Activated T-helper 2 cell treated with anti-CD3 and anti-CD28 coated beads, Interferon-gamma antibody, Interleukin-2, Interleukin-4, amounts not matched to agents 10 μg/mL and 5 μg/mL and 100 μg/mL, durations not matched to agents 14 hours and 24 hours and 36 hours (primary cell): ENCODE measurements at regions of chr2 and their contacts with region 1.

Region 1: GRCh38 chr2:75710577-75711253 is at the start of gene GCFC2:
- DNase-seq: peak; percentile 84
- H3K4me3 Mint-ChIP-seq: peak within 1 kb of the TSS; percentile 88
- H3K27ac Mint-ChIP-seq: peak within 1 kb of the TSS; percentile 94
- H3K4me1 Mint-ChIP-seq: peaks cover 18% of the 10 kb centered on the region
- H3K27me3 Mint-ChIP-seq: peaks cover 5% of the 10 kb centered on the region
- total RNA-seq, gene GCFC2: 32.0 and 32.1 TPM in 2 replicates

Region 2: DNA sequence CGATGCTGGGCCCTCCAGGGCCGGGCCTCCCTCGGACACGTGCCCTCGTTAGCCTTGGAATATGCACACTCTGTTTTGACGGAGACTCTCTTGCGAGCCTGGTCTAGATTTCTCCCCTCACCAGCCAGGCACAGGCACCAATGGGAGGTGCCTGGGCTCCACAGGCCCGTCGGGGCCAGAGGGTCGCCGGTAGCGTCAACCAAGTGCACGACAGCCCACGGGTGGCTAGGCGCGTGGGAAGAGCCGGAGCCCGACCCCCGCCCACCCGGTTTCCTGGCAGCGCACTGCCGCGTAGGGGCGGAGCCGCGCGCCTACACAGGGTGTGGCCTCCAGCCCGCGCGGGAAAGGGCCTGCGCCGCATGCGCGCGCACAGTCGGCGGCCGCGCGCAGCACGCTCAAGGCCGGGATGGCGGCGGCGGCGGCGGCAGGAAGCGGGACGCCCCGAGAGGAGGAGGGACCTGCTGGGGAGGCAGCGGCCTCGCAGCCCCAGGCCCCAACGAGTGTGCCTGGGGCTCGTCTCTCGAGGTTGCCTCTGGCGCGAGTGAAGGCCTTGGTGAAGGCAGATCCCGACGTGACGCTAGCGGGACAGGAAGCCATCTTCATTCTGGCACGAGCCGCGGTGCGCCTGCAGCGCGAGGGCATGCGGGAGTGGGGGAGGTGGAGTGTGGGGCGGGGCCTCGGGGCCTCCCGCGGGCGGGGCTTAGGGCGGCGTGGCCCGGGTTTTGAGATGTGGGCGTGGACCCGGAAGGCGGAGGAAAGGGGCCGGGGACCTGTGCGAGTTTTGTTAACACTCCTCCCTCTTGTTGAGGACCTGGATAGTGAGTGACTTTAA is 752.2 kb before region 1 on chr2 and contains the start of gene POLE4:
- intact Hi-C with region 1: loop called (anchors 2 kb)
- DNase-seq: peak; percentile 90
- H3K4me3 Mint-ChIP-seq: peak within 1 kb of the TSS; percentile 79
- H3K27ac Mint-ChIP-seq: peak within 1 kb of the TSS; percentile 86
- H3K4me1 Mint-ChIP-seq: peaks cover 51% of the 10 kb centered on the region
- H3K27me3 Mint-ChIP-seq: no peaks in the 10 kb centered on the region
- total RNA-seq, gene POLE4: 46.1 and 55.3 TPM in 2 replicates

Region 3: DNA sequence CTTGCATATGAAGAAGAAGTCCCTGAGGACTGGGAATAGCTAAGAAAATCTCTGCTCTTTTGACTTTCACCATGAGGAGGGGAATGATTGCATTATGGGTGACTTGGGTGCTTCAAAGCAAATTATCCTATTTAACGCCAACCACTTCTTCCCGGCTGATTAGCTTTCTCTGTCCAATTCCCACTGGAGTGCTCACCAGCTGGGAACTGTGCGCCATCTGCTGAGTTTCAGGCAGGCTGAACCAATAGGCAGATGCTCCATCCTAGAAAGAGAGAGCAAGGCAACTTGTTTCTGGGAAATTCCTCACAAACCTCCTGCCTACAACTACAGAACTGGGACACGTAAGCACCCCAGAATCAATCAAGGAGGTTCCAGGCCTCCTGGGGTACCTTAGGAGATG is 702.9 kb before region 1 on chr2:
- intact Hi-C with region 1: no loop called
- DNase-seq: no peak
- H3K4me3 Mint-ChIP-seq: no peak overlapping the region
- H3K27ac Mint-ChIP-seq: no peak overlapping the region
- H3K4me1 Mint-ChIP-seq: no peaks in the 10 kb centered on the region
- H3K27me3 Mint-ChIP-seq: no peaks in the 10 kb centered on the region

Region 4: DNA sequence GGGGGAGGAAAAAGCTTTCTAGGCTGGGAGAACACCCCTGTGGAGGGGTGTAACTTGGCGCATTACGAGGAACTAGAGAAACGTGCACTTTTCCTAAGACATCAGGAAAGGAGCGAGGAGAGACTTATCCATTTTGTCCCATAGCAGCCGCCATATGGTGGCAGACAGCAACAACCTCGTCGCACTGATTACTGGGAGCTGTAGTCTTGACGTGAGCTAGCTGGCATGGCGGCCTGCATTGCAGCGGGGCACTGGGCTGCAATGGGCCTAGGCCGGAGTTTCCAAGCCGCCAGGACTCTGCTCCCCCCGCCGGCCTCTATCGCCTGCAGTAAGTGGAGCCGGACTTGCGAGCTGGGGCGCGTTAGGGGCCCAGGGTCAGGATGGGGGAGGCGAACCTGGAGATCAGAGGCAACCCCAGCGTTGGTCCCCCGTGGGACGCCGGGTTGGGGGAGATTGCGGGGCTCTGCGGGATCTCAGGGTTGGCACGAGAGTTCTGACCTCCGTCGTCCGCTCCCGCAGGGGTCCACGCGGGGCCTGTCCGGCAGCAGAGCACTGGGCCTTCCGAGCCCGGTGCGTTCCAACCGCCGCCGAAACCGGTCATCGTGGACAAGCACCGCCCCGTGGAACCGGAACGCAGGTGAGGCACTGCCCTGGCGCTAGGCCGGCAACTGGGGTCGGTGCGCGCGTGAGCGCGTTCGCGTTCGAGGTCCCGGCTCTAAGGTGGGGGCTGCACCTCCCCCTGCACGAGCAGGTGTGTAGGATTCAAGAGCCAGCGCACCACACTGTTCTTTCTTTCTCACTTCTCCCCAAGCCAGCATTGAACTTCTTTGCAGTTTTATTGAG is 63.9 kb before region 1 on chr2 and contains the start of gene MRPL19:
- intact Hi-C with region 1: loop called (anchors 1 kb)
- DNase-seq: peak; percentile 71
- H3K4me3 Mint-ChIP-seq: peak within 1 kb of the TSS; percentile 91
- H3K27ac Mint-ChIP-seq: peak within 1 kb of the TSS; percentile 94
- H3K4me1 Mint-ChIP-seq: peaks cover 14% of the 10 kb centered on the region
- H3K27me3 Mint-ChIP-seq: no peaks in the 10 kb centered on the region
- total RNA-seq, gene MRPL19: 67.7 and 73.5 TPM in 2 replicates

Region 5: DNA sequence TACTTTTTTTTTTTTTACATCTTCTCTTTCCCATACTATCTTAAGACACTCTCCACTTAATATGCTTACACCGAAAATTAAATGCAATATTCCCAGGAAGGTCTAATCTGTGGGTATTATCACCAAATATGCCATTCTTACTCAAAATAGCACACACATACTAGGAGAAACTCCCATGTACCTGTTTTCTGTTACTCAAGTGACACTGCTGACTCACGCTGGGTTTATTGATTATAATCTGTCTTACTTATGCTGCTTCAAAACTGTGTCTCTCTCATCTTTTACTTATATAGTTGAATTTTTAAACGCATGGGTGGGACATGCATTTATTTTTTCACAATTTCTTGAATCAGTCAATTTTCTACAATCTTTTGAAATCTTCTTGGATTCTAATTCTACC is 34.3 kb before region 1 on chr2:
- intact Hi-C with region 1: loop called (anchors 5 kb)
- DNase-seq: no peak
- H3K4me3 Mint-ChIP-seq: no peak overlapping the region
- H3K27ac Mint-ChIP-seq: peak overlapping the region; percentile 71
- H3K4me1 Mint-ChIP-seq: peaks cover 18% of the 10 kb centered on the region
- H3K27me3 Mint-ChIP-seq: no peaks in the 10 kb centered on the region